A673 (cell line): ENCODE measurements at regions of chr11 and their contacts with region 1.

Region 1: GRCh38 chr11:67507864-67508485 is at the start of gene CDK2AP2:
- DNase-seq: peak; percentile 100
- H3K4me3 ChIP-seq: peak within 1 kb of the TSS; percentile 70
- H3K27ac ChIP-seq: peak within 1 kb of the TSS; percentile 92
- H3K4me1 ChIP-seq: peaks cover 34% of the 10 kb centered on the region
- H3K27me3 ChIP-seq: no peaks in the 10 kb centered on the region
- CTCF ChIP-seq: no peak
- total RNA-seq, gene CDK2AP2: 48.1 and 51.3 TPM in 2 replicates

Region 2: DNA sequence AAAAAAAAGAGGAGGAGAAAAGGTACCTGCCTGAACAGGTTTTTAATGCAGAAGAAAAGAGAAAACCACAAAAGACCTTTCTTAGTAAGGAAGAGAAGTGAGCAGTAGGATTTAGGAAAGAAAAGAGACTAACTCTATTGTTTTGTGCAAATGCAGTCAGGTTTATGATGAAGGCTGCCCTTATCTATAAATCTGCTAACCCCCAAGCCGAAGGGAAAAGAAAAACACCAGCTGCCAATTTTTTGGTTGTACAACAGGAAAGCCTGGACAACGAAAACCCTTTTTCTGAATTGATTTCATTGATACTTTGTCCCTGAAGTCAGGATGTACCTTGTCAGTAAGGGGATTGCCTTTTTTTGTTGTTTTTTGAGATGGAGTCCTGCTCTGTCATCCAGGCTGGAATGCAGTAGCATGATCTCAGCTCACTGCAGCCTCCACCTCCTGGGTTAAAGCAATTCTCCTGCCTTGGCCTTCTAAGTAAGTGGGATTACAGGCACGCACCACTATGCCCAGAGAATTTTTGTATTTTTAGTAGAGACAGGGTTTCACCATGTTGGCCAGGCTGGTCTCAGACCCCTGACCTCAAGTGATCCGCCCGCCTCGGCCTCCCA is 175.8 kb before region 1 on chr11:
- CTCF ChIA-PET with region 1: no interaction called
- POLR2A ChIA-PET with region 1: no interaction called
- intact Hi-C with region 1: no loop called
- DNase-seq: no peak
- H3K4me3 ChIP-seq: no peak overlapping the region
- H3K27ac ChIP-seq: no peak overlapping the region
- H3K4me1 ChIP-seq: no peaks in the 10 kb centered on the region
- H3K27me3 ChIP-seq: no peaks in the 10 kb centered on the region
- CTCF ChIP-seq: no peak

Region 3: DNA sequence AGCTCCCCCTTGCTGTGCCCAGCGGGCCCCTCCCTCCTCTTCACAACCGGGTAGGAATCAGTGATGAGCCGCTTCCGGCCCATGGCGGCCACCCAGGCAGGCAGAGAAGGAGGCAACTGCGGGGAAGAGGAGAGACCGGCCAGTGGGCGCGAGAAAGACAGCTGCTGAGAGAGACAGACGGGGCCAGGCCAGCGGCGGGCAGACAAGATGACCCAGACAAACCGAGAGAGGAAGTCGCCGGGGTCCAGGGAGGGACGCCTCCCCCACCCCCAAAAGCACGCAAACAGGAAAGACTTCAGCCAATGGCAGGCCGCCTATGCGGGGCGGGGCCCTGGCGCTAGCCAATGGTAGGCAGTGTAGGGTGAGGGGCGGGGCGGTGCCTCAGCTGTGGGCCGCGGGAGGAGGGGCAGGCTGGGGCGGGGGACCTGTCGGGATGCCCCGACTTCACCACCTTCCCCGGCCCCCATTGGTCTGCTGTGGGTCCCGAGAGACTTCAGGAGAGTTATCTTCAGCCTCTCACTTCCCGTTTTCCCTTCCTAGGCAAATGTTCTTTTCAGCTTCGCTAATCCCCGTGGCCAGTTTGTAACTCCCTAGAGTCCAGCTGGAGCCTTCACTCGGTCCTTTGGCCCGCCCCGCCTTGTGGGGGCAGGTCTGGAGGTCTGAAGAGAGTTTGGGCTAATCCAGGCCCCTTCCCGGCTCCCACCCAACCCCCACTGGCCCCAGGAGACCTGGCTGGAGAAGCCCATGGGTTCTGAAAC is 154.5 kb before region 1 on chr11 and contains the start of gene POLD4:
- CTCF ChIA-PET with region 1: no interaction called
- POLR2A ChIA-PET with region 1: no interaction called
- intact Hi-C with region 1: loop called (anchors 5 kb)
- DNase-seq: peak; percentile 98
- H3K4me3 ChIP-seq: peak within 1 kb of the TSS; percentile 90
- H3K27ac ChIP-seq: peak within 1 kb of the TSS; percentile 91
- H3K4me1 ChIP-seq: peaks cover 25% of the 10 kb centered on the region
- H3K27me3 ChIP-seq: no peaks in the 10 kb centered on the region
- CTCF ChIP-seq: no peak
- total RNA-seq, gene POLD4: 13.2 and 14.3 TPM in 2 replicates